Mammary epithelial cell (primary cell): ENCODE measurements at regions of chr11 and their contacts with region 1.

Region 1: GRCh38 chr11:58928691-58929090 is 10.6 kb upstream of the GLYATL1 start:
- DNase-seq: no peak
- H3K4me3 ChIP-seq: no peak overlapping the region
- H3K27ac ChIP-seq: no peak overlapping the region
- H3K4me1 ChIP-seq: peaks cover 9% of the 10 kb centered on the region
- H3K27me3 ChIP-seq: no peaks in the 10 kb centered on the region
- CTCF ChIP-seq: no peak

Region 2: DNA sequence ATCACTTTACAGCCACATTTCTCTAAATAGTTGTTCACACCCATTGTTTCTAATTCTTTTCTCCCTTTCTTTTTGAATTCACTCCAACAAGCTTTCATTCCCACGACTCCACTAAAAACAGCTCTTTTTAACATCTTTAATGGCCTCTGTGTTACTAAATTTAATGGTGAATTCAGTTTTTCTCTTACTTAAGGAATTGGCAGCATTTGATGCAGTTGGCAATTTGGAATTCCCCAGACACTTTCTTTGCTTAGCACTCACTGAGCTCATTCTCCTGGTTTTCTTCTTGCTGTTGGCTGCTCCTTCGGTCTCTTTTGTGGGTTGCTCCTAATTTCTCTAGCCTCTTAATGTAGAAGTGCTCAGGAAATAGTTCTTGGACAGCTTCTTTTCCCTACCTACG is 945.5 kb before region 1 on chr11:
- CTCF ChIA-PET with region 1: no interaction called
- dilution Hi-C with region 1: no loop called
- in situ Hi-C with region 1: no loop called
- intact Hi-C with region 1: no loop called
- DNase-seq: no peak
- H3K4me3 ChIP-seq: no peak overlapping the region
- H3K27ac ChIP-seq: no peak overlapping the region
- H3K4me1 ChIP-seq: no peaks in the 10 kb centered on the region
- H3K27me3 ChIP-seq: peaks cover 1% of the 10 kb centered on the region
- CTCF ChIP-seq: no peak

Region 3: GRCh38 chr11:58958500-58958899 is 29.8 kb after region 1 on chr11:
- CTCF ChIA-PET with region 1: interaction called, 25 read pairs
- dilution Hi-C with region 1: no loop called
- in situ Hi-C with region 1: no loop called
- intact Hi-C with region 1: no loop called
- DNase-seq: no peak
- H3K4me3 ChIP-seq: no peak overlapping the region
- H3K27ac ChIP-seq: no peak overlapping the region
- H3K4me1 ChIP-seq: no peaks in the 10 kb centered on the region
- H3K27me3 ChIP-seq: peaks cover 3% of the 10 kb centered on the region
- CTCF ChIP-seq: peak; percentile 35 to 52

Region 4: DNA sequence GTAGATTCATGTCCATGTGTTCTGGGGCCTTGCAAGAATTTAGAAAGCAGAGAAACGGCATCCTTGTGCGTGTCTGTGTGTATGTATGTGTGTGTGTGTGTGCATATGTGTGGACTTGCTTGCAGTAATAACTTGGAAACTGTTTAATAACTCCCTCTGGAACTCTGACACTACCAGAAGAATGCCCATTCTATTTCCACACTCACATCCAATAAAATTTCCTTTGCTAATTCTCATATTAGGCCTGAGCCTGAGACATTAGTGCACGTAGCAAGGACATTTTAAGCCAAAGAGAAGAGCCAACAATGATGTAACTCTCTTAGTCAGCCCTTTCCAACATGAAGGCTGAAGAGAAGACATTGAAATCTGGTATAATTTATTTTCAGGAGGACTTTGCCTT is 531.2 kb after region 1 on chr11:
- CTCF ChIA-PET with region 1: no interaction called
- dilution Hi-C with region 1: no loop called
- in situ Hi-C with region 1: no loop called
- intact Hi-C with region 1: no loop called
- DNase-seq: no peak
- H3K4me3 ChIP-seq: no peak overlapping the region
- H3K27ac ChIP-seq: no peak overlapping the region
- H3K4me1 ChIP-seq: no peaks in the 10 kb centered on the region
- H3K27me3 ChIP-seq: no peaks in the 10 kb centered on the region
- CTCF ChIP-seq: no peak